ENCODE measurements at regions of chr9 and their contacts with region 1.

Region 1: GRCh38 chr9:27258662-27259061 is 38.3 kb downstream of the EQTN start:
- DNase-seq: no peak
- ATAC-seq: no peak

Region 2: GRCh38 chr9:26551971-26552370 is 706.7 kb before region 1 on chr9:
- intact Hi-C with region 1: no loop called
- DNase-seq: no peak
- ATAC-seq: no peak

Region 3: GRCh38 chr9:27204578-27204977 is 54.1 kb before region 1 on chr9:
- intact Hi-C with region 1: loop called in 1 of 2 experiments (anchors 10 kb)
- DNase-seq: no peak
- ATAC-seq: no peak